ENCODE measurements at regions of chr4 and their contacts with region 1.

Region 1: DNA sequence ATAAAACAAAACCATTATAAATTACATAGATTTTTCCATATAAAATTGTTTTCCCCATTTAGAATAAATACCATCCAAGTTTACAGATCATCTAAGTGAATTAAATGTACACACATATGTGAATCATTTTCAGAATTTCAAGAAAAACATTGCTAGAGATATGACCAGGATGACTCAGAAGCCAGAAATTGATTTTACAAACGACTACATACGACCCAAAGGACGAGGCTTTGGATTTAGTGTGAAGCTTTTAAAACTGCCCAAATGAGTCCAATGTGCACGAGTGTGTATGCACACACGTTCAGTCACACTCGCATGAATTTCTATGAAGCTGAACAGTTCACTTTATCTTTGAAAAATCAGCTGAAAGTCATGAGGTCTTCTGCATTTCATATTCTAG is 37.9 kb downstream of the MFAP3L start:
- DNase-seq: no peak
- H3K4me3 Mint-ChIP-seq: no peak overlapping the region
- H3K27ac Mint-ChIP-seq: no peak overlapping the region
- H3K4me1 Mint-ChIP-seq: peaks cover 16% of the 10 kb centered on the region
- H3K27me3 Mint-ChIP-seq: peaks cover 5% of the 10 kb centered on the region

Region 2: GRCh38 chr4:169619959-169620879 is 368.0 kb before region 1 on chr4 and contains the start of gene CLCN3:
- intact Hi-C with region 1: loop called (anchors 5 kb)
- DNase-seq: peak; percentile 88
- H3K4me3 Mint-ChIP-seq: peak within 1 kb of the TSS; percentile 94
- H3K27ac Mint-ChIP-seq: peak within 1 kb of the TSS; percentile 98
- H3K4me1 Mint-ChIP-seq: peaks cover 67% of the 10 kb centered on the region
- H3K27me3 Mint-ChIP-seq: no peaks in the 10 kb centered on the region
- total RNA-seq, gene CLCN3: 29.4 and 30.2 TPM in 2 replicates